Dorsolateral prefrontal cortex (tissue), 120 donors: ENCODE measurements at regions of chr14 and their contacts with region 1.

Region 1: DNA sequence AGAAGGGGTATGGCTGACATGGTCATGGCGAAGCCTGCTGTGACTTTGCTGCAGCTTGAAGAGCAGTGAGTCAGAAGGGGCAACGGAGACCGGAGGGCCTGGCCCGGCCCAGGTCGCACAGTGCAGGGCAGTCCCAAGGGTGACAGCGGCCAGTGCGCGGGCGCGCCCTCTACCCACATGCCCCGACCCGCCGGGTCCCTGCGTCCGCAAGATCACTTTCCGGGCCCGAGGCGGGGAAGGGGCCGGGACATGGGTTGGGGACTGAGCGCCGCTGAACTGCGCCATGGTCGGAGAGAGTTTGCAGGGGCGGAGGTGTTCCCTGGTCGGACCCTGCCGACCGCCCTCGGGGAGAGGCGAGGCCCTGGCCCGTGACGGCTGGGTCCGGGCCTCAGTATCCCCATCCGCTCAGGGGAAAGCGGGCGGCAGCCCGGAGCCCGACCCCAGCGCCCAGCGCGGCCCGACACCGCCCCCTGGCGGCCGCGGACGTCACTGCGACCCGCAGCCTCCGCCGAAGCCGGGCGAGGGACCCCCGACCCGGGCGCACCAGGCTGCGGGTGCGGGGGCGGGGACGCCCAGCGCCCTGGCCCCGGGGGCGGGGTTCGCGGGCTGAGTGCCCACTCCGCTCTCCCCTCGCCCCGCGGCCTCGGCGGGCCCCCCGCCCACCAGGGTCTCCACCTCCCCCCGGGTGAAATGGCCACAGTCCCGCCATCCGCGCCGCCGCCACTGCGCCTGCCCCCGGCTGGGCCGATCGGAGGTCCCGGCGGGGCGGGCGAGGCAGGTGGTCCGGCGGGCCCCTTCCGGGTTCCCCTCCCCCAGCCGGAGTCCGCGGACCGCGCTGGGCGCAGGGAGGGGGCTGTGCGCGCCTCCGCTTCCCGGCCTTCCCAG is 7.2 kb upstream of the ANKRD9 start:
- DNase-seq: peak in 3 of 10 donors; percentile 48 to 81 (median 67)
- H3K4me3 ChIP-seq: peak overlapping the region; percentile 47 to 90 (median 72)
- H3K27ac ChIP-seq: peak overlapping the region in 53 of 59 donors; percentile 16 to 96 (median 73)
- H3K27me3 ChIP-seq: no peaks in the 10 kb centered on the region
- CTCF ChIP-seq: peak; percentile 39 to 99 (median 90)

Region 2: GRCh38 chr14:102227184-102227964 is 289.4 kb before region 1 on chr14:
- intact Hi-C with region 1: loop called in 1 of 2 experiments (anchors 5 kb)
- DNase-seq: peak in 1 of 10 donors; percentile 36
- H3K4me3 ChIP-seq: no peak overlapping the region
- H3K27ac ChIP-seq: peak overlapping the region in 31 of 59 donors; percentile 4 to 78 (median 55)
- H3K27me3 ChIP-seq: no peaks in the 10 kb centered on the region
- CTCF ChIP-seq: no peak

Region 3: GRCh38 chr14:102421411-102422053 is 95.2 kb before region 1 on chr14:
- intact Hi-C with region 1: no loop called
- DNase-seq: no peak
- H3K4me3 ChIP-seq: no peak overlapping the region
- H3K27ac ChIP-seq: peak overlapping the region; percentile 41 to 100 (median 96)
- H3K27me3 ChIP-seq: no peaks in the 10 kb centered on the region
- CTCF ChIP-seq: peak in 15 of 56 donors; percentile 14 to 57 (median 30)

Region 4: GRCh38 chr14:102437997-102438915 is 78.5 kb before region 1 on chr14:
- intact Hi-C with region 1: loop called (anchors 1 kb)
- DNase-seq: peak; percentile 84 to 94 (median 90)
- H3K4me3 ChIP-seq: peak overlapping the region in 57 of 59 donors; percentile 2 to 63 (median 43)
- H3K27ac ChIP-seq: peak overlapping the region in 57 of 59 donors; percentile 9 to 92 (median 78)
- H3K27me3 ChIP-seq: no peaks in the 10 kb centered on the region
- CTCF ChIP-seq: peak; percentile 74 to 97 (median 92)